Activated naive CD4-positive, alpha-beta T cell treated with anti-CD3 and anti-CD28 coated beads for 36 hours (primary cell): ENCODE measurements at regions of chr12 and their contacts with region 1.

Region 1: DNA sequence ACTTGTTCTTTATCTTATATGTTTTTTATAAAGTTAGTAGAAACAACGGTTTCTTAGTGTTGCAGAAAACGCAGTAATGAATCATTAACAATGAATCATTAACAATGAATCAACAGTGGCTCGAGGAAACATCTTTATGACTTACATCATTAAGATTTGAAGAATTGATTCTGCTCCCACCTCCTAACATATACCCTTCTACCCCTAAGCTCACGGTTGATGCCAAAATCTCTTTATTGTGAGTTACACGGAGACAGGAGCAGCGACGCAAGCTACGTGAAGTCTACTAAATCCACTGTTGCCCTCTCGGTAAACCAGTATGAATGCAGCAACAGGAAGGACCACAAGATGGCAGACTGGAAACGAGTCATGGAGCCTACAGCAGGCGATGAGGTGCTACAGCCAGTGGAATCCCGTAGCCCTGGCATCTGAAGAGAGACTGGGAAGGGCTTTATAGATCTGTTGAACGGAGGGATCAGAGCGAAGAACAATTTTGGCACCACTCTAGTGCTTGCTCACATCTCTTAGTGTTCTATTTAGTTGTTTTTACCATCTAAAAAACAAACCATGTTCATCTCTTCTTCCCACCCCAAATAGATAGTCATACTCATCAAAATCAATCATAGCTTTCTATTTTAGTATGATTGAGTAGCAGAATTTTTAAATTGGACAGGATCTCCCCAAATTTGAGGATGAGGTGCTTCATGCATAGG is 332.7 kb downstream of the DUSP6 start:
- DNase-seq: peak; percentile 86
- H3K4me3 Mint-ChIP-seq: no peak overlapping the region
- H3K27ac Mint-ChIP-seq: no peak overlapping the region
- H3K4me1 Mint-ChIP-seq: peaks cover 6% of the 10 kb centered on the region
- H3K27me3 Mint-ChIP-seq: peaks cover 3% of the 10 kb centered on the region

Region 2: DNA sequence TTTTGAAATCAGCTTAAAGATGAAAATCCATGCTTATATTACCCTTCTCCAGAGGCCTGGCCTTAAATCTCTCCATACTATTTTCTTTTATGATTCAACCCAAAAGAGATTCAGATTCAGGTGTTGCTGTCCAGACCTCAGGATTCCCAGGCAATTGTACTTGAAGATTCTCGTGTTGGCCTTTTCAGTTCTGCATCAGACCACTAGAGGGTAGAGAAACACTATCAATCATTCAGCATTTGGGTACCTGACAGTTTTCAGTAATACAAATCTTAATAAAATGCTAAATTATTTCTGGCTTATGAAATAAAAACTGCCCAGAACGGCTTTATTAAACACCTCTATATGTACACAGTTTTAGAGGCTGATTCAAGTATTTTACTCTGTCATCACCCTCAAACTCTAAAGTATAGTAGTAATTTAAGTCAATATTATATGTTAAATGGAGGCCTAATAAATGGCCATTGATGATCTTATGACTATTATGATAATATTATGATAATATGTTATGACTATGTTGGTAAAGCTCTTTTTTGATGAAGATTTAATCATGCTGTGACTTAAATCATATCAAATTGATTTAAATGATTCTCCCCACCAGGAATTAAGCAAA is 31.6 kb after region 1 on chr12:
- CTCF ChIA-PET with region 1: interaction called, 7 read pairs
- intact Hi-C with region 1: loop called (anchors 1 kb)
- DNase-seq: peak; percentile 37
- H3K4me3 Mint-ChIP-seq: no peak overlapping the region
- H3K27ac Mint-ChIP-seq: no peak overlapping the region
- H3K4me1 Mint-ChIP-seq: peaks cover 10% of the 10 kb centered on the region
- H3K27me3 Mint-ChIP-seq: no peaks in the 10 kb centered on the region

Region 3: DNA sequence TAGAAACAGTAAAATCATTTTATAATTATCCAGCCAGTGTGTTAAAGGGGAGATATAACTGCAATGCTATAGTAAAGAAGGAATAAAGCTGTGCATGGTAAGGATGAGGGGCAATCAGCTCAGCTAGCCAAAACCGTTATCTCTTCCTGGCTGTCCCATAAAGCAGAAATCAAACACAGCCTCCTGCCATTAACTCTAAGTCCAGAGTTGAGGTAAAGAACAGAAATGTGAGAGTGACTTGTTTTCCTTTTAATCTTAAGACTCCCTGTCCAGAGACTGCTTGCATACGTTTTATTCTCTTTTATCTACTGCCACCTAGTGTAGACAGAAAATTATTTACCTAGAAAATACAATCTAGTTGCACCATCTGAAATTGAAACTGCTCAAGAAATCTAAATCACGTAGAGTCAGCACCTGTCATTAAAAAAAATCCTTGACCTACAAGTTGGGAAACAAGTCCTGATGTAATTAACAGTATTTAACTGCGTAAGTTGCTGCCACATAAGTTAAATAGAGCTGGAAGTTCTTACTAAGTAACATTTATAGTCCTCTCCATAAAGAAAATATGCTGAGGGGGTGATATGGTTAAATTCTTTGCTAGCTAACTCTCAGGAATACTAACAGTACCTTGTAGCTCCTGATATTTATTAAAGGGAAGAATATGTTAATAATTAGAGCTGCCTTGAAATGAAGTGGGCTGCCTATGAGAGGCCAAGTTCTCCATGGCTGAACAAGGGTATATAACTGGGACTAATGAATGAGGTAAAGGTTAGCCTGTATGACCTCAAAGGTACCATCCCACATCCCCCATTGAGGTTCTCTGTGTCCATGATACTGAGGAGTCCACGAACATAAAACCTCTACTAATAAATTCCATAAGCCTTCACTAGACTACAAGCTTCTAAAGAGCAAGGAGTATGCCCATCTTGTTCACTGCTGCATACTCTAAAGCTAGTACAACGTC is 442.4 kb after region 1 on chr12:
- CTCF ChIA-PET with region 1: interaction called, 52 read pairs
- intact Hi-C with region 1: loop called (anchors 1 kb)
- DNase-seq: no peak
- H3K4me3 Mint-ChIP-seq: peak overlapping the region; percentile 15
- H3K27ac Mint-ChIP-seq: peak overlapping the region; percentile 48
- H3K4me1 Mint-ChIP-seq: peaks cover 13% of the 10 kb centered on the region
- H3K27me3 Mint-ChIP-seq: no peaks in the 10 kb centered on the region

Region 4: GRCh38 chr12:89529738-89530137 is 510.2 kb after region 1 on chr12:
- CTCF ChIA-PET with region 1: interaction called, 34 read pairs
- intact Hi-C with region 1: loop called (anchors 1 kb)
- DNase-seq: no peak
- H3K4me3 Mint-ChIP-seq: no peak overlapping the region
- H3K27ac Mint-ChIP-seq: no peak overlapping the region
- H3K4me1 Mint-ChIP-seq: peaks cover 9% of the 10 kb centered on the region
- H3K27me3 Mint-ChIP-seq: no peaks in the 10 kb centered on the region

Region 5: GRCh38 chr12:89949457-89950195 is 930.1 kb after region 1 on chr12:
- CTCF ChIA-PET with region 1: no interaction called
- intact Hi-C with region 1: loop called (anchors 10 kb)
- DNase-seq: peak; percentile 68
- H3K4me3 Mint-ChIP-seq: no peak overlapping the region
- H3K27ac Mint-ChIP-seq: no peak overlapping the region
- H3K4me1 Mint-ChIP-seq: peaks cover 39% of the 10 kb centered on the region
- H3K27me3 Mint-ChIP-seq: no peaks in the 10 kb centered on the region

Region 6: DNA sequence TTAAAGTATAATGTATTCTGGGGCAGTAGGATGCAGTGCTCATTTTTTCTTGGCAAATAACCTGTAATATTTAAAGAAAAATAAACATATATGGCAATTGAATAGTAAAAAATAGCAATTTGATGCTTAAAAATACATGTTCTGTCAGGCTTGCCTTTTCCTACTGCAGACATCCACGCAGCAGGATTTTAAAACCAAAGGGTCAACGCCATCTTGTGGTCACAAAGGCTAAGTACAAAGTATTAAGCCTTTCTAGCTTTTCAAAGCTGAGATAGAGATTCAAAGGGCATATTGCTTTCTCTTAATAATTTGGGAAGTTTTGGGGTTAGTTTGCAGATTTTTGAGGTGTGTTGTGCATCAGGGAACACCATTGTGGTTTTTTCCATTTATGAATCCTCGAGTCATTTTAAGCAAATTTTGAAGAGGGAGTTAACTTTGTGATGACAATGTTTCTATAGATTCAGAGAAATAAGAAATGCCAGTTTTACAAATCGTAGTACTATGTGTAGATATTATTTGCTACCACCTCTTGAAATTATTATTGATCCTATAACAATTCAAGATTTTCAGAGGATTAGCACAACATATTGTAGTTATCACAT is 1940.1 kb after region 1 on chr12:
- CTCF ChIA-PET with region 1: no interaction called
- intact Hi-C with region 1: loop called (anchors 1 kb)
- DNase-seq: peak; percentile 29
- H3K4me3 Mint-ChIP-seq: no peak overlapping the region
- H3K27ac Mint-ChIP-seq: no peak overlapping the region
- H3K4me1 Mint-ChIP-seq: no peaks in the 10 kb centered on the region
- H3K27me3 Mint-ChIP-seq: no peaks in the 10 kb centered on the region